SK-N-SH (cell line): ENCODE measurements at regions of chr2 and their contacts with region 1.

Region 1: DNA sequence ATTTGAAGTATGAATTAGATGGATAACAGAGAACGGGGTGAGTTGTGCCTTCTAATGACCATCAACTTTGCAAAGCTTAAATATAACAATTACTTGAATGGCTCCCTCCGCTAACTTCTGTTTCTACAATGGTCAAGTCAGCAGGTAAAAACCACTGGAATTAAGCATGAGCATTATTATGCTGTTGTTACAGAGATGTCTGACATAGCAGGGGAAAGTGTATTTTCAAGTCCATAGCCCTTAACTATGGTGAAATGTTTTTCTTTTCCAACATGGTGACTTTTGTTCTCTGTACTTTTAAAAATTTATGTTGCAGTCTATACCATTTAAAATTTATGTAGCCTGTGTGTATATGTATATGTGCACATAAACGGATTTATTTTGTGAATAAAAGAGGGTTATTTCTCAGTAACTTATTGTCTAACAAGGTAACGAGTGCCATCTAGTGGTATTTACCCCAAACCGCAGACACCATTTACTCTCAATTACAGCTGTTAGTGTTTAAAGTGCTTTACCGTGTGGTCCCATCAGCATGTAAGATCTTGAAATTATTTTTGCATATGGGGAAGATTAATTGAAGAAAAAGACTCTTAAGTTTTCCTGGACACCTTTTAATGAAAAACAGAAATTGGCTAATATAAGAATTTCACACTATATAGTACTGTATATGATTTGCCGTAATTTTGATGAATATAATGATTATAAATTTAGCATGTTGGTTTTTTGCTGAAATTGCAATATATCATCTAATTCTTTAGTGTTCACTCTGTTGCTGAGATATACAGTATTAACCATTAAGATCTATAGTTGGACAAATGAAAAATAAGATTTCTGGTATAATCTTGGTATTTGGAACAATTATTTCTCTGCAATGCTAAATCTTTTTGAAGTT is 78.2 kb downstream of the UBE2E3 start:
- DNase-seq: peak; percentile 3
- H3K4me3 ChIP-seq: no peak overlapping the region; a peak in 1 of 4 replicates
- H3K27ac ChIP-seq: no peak overlapping the region
- H3K4me1 ChIP-seq: no peaks in the 10 kb centered on the region
- H3K27me3 ChIP-seq: no peaks in the 10 kb centered on the region
- CTCF ChIP-seq: peak; percentile 60
- EP300 ChIP-seq: no peak
- RAD21 ChIP-seq: peak; percentile 73

Region 2: GRCh38 chr2:180776921-180777320 is 281.7 kb before region 1 on chr2:
- CTCF ChIA-PET with region 1: no interaction called
- POLR2A ChIA-PET with region 1: no interaction called
- DNase-seq: no peak
- H3K4me3 ChIP-seq: no peak overlapping the region
- H3K27ac ChIP-seq: peak overlapping the region in 1 of 2 experiments; percentile 0; a peak in 1 of 4 replicates
- H3K4me1 ChIP-seq: no peaks in the 10 kb centered on the region; a peak in 1 of 4 replicates
- H3K27me3 ChIP-seq: no peaks in the 10 kb centered on the region
- CTCF ChIP-seq: no peak
- EP300 ChIP-seq: peak in 1 of 2 experiments; percentile 31; a peak in 2 of 4 replicates
- RAD21 ChIP-seq: no peak

Region 3: GRCh38 chr2:181046833-181047232 is 11.8 kb before region 1 on chr2:
- CTCF ChIA-PET with region 1: interaction called, 17 read pairs
- POLR2A ChIA-PET with region 1: no interaction called
- DNase-seq: no peak
- H3K4me3 ChIP-seq: no peak overlapping the region
- H3K27ac ChIP-seq: no peak overlapping the region
- H3K4me1 ChIP-seq: peaks cover 0 to 4% of the 10 kb centered on the region in 2 experiments; a peak in 2 of 4 replicates
- H3K27me3 ChIP-seq: no peaks in the 10 kb centered on the region
- CTCF ChIP-seq: no peak
- EP300 ChIP-seq: no peak
- RAD21 ChIP-seq: no peak